ENCODE measurements at regions of chr9 and their contacts with region 1.

Region 1: DNA sequence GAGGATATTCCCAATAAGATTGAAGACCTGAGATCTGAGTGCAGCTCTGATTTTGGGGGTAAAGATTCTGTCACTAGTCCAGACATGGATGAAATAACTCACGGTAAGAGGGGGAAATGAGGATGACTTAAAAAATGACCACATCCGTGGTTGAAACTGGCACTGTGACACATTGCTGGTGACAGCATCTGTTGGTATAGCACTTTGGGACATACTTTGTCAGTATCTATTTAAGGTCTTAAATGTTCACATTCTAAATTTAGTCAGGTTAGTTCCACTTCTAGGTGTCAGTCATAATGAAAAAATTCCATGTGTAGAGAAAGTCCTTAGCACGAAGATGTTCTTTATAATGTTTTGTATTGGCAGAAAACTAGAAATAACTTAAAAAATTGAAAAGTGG is 70.9 kb downstream of the GAPVD1 start:
- DNase-seq: peak; percentile 69
- H3K4me3 Mint-ChIP-seq: no peak overlapping the region
- H3K27ac Mint-ChIP-seq: peak overlapping the region; percentile 7
- H3K4me1 Mint-ChIP-seq: peaks cover 16% of the 10 kb centered on the region
- H3K27me3 Mint-ChIP-seq: no peaks in the 10 kb centered on the region

Region 2: DNA sequence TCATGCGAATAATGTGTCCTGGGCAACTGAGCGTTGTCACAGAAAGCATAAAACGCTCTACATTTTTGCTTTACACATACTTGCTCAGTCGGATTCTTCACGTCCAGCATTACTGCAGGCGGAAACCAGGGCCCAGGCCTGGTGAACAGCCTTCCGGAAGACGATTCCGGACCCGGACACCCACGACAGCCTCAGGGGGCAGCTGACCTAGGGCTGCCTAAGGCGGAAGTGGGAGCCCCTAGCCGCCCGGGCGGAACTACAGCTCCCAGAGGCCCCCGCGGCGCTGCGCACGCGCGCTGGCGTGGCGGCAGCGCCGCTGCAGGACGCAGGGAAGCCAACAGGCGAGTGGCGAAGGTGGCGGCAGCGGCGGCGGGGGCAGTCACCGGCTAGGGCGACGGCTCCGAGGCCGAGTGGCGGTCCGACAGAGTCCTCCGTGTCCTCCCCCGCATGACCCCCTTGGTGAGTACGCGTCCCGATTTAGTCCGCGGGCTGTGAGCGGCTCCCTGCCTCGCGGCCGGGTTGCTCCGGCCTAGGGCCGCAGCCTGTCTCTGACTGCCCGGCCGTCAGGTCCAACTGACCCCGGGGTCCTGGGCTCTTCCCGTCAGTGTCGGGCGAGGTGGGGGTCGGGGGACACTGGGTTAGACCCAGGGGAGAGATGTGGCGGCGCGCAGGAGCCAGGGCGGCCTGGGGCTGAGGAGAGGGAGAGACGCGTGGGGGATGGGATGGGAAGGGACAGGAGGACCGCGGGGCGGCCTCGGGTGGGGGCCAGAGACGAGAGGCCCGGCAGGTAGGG is 70.8 kb before region 1 on chr9 and contains the start of gene GAPVD1:
- CTCF ChIA-PET with region 1: no interaction called
- POLR2A ChIA-PET with region 1: no interaction called
- intact Hi-C with region 1: loop called (anchors 5 kb)
- DNase-seq: peak; percentile 94
- H3K4me3 Mint-ChIP-seq: peak within 1 kb of the TSS; percentile 99
- H3K27ac Mint-ChIP-seq: peak within 1 kb of the TSS; percentile 93
- H3K4me1 Mint-ChIP-seq: peaks cover 45% of the 10 kb centered on the region
- H3K27me3 Mint-ChIP-seq: peaks cover 2% of the 10 kb centered on the region
- total RNA-seq, gene GAPVD1: 42.2 to 46.8 TPM

Region 3: DNA sequence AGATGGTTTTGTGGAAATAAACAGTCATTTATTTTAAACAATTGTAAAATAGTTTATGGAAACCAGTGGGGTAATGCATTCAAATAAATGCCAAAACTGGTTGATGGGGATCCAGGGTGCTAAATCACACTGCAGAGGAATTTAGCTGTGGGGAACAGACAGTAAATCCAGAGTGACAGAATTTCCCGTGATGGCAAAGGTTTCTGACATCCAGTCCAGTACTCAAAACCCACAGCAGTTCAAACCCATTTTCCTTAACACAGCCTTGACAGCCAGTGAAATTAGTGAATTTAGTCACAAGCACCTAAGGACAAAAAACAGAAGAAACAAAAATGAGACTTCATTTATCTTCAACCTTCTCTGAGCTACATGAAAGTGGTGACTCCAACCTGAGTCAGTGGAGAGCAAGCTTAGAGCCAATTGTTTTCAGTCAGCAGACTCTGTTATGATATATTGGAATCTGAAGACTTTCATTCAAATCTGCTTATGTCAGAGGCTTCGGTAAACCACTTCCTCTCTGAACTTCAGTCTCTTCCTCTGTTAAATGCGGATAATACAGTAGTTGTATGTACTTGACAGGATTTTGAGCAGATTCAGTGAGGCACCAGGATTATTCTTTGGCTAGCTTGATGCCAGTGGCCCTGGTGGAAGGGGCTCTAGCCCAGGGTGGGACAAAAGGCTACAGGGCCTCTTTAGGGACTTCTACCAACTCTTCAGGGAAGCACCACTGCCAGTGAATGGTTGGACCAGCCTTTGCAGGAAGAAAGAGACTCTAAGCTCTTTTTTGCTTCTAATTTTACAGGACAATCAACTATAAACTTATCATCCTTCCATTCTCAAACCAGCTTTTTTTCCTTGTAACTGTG is 189.2 kb after region 1 on chr9:
- CTCF ChIA-PET with region 1: no interaction called
- POLR2A ChIA-PET with region 1: no interaction called
- intact Hi-C with region 1: loop called (anchors 5 kb)
- DNase-seq: peak; percentile 56
- H3K4me3 Mint-ChIP-seq: peak overlapping the region; percentile 52
- H3K27ac Mint-ChIP-seq: peak overlapping the region; percentile 81
- H3K4me1 Mint-ChIP-seq: peaks cover 52% of the 10 kb centered on the region
- H3K27me3 Mint-ChIP-seq: no peaks in the 10 kb centered on the region

Measured in activated CD4-positive, alpha-beta memory T cell treated with anti-CD3 and anti-CD28 coated beads for 36 hours (primary cell).